T-cell (primary cell): ENCODE measurements at regions of chr21 and their contacts with region 1.

Region 1: GRCh38 chr21:23977971-23978370 is 1629.3 kb downstream of the MRPL39 start:
- DNase-seq: no peak
- ATAC-seq: no peak
- H3K4me3 ChIP-seq: no peak overlapping the region
- H3K4me3 Mint-ChIP-seq: no peak overlapping the region
- H3K27ac ChIP-seq: no peak overlapping the region
- H3K27ac Mint-ChIP-seq: no peak overlapping the region
- H3K4me1 ChIP-seq: peaks cover 0 to 15% of the 10 kb centered on the region in 2 experiments
- H3K4me1 Mint-ChIP-seq: no peaks in the 10 kb centered on the region
- H3K27me3 ChIP-seq: no peaks in the 10 kb centered on the region
- H3K27me3 Mint-ChIP-seq: no peaks in the 10 kb centered on the region

Region 2: DNA sequence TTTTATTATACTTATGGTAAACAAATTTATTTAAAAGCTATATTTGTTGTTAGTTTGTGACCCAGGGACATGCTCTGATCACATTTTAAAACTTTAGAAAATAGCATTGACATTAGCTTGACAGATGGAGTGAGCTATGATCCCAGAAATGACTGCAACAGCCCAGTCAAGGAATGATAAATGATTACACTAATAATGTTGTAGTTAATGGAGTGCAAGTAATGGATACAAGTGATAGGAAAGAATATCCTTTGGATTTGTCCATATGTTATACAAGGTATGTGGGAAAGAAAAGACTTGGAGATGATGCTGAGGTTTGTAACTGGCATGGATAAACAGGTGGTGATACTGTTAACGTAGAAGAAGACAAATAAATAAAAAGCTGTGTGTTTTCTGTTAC is 279.4 kb before region 1 on chr21:
- CTCF ChIA-PET with region 1: interaction called in 1 of 2 experiments, 10 read pairs
- POLR2A ChIA-PET with region 1: no interaction called
- DNase-seq: no peak
- ATAC-seq: no peak
- H3K4me3 ChIP-seq: no peak overlapping the region
- H3K4me3 Mint-ChIP-seq: no peak overlapping the region
- H3K27ac ChIP-seq: no peak overlapping the region
- H3K27ac Mint-ChIP-seq: no peak overlapping the region
- H3K4me1 ChIP-seq: no peaks in the 10 kb centered on the region
- H3K4me1 Mint-ChIP-seq: no peaks in the 10 kb centered on the region
- H3K27me3 ChIP-seq: no peaks in the 10 kb centered on the region
- H3K27me3 Mint-ChIP-seq: no peaks in the 10 kb centered on the region

Region 3: DNA sequence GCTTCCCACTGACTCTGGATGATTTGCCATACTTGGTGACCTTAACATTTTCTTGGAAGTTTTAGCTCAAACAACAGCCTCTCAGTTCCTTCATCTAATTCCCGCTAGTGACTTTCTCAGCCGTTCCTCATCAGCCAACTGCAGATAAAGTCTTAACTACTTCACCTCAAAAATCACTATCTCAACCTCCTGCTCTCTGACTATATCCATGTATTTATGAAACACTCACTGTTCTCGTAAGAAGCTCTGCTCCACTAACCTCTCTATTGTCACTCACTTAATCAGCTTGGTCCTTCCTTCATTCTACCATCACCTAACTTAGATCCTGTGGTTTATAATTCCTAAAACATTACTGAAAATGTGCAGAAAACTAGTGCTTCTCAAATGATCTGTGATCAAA is 77.7 kb after region 1 on chr21:
- CTCF ChIA-PET with region 1: no interaction called
- POLR2A ChIA-PET with region 1: no interaction called
- DNase-seq: no peak
- ATAC-seq: no peak
- H3K4me3 ChIP-seq: no peak overlapping the region
- H3K4me3 Mint-ChIP-seq: no peak overlapping the region
- H3K27ac ChIP-seq: no peak overlapping the region
- H3K27ac Mint-ChIP-seq: no peak overlapping the region
- H3K4me1 ChIP-seq: no peaks in the 10 kb centered on the region
- H3K4me1 Mint-ChIP-seq: peaks cover 0 to 4% (median 4%) of the 10 kb centered on the region in 3 donors
- H3K27me3 ChIP-seq: no peaks in the 10 kb centered on the region
- H3K27me3 Mint-ChIP-seq: no peaks in the 10 kb centered on the region